Breast epithelium (tissue), 4 donors: ENCODE measurements at regions of chr1 and their contacts with region 1.

Region 1: GRCh38 chr1:151513626-151514427 is 2.6 kb downstream of the CGN start:
- DNase-seq: peak; percentile 58 to 59
- H3K4me3 ChIP-seq: peak overlapping the region in 2 of 3 donors; percentile 74 to 77
- H3K27ac ChIP-seq: peak overlapping the region; percentile 94 to 95
- H3K4me1 ChIP-seq: no peaks in the 10 kb centered on the region
- H3K27me3 ChIP-seq: no peaks in the 10 kb centered on the region
- CTCF ChIP-seq: no peak
- POLR2A ChIP-seq: no peak

Region 2: GRCh38 chr1:151565502-151566189 is 51.8 kb after region 1 on chr1:
- intact Hi-C with region 1: loop called (anchors 2 kb)
- DNase-seq: no peak
- H3K4me3 ChIP-seq: no peak overlapping the region
- H3K27ac ChIP-seq: peak overlapping the region in 1 of 2 donors; percentile 13
- H3K4me1 ChIP-seq: no peaks in the 10 kb centered on the region
- H3K27me3 ChIP-seq: no peaks in the 10 kb centered on the region
- CTCF ChIP-seq: no peak
- POLR2A ChIP-seq: no peak

Region 3: GRCh38 chr1:152869808-152870419 is 1356.1 kb after region 1 on chr1:
- intact Hi-C with region 1: no loop called
- DNase-seq: peak; percentile 44 to 55
- H3K4me3 ChIP-seq: no peak overlapping the region
- H3K27ac ChIP-seq: no peak overlapping the region
- H3K4me1 ChIP-seq: no peaks in the 10 kb centered on the region
- H3K27me3 ChIP-seq: no peaks in the 10 kb centered on the region
- CTCF ChIP-seq: peak; percentile 48 to 57 (median 55)
- POLR2A ChIP-seq: no peak